SK-N-SH (cell line): ENCODE measurements at regions of chr5 and their contacts with region 1.

Region 1: DNA sequence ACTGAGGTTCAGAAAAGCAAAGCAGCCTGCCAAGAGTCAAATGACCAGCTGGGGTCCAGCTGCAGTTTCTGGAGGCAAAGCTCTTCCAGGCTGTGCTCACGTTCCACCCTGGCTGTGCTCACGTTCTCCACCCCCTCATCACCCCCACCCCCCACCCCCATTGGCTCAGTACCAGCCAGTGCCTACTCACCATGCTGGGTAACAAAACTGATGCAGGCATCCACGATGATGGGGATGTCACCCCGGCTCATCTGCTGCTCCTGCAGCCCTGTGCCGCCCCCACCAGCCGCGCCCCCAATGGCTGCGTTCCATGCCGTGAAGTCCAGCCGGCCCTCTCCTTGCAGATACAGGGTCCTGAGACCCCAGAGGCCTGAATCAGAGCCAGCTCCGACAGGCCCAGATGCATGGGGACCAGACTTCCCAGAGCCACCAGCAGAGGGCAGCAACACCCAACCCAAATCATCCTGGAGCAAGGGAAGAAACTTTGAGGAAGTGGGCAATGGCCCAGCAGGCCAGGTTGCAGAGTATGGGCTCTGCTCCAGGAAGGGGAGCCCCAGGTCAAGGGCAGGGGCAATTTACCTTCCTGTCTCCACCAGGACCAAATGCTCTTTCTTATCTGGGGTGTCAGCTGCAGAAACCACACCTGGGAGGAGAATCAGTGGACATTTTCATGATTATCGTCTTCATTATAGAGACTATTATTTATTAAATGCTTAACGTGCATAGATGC is 13.7 kb upstream of the FCHSD1 start:
- DNase-seq: peak; percentile 90
- H3K4me3 ChIP-seq: no peak overlapping the region; a peak in 1 of 4 replicates
- H3K27ac ChIP-seq: no peak overlapping the region
- H3K4me1 ChIP-seq: no peaks in the 10 kb centered on the region; a peak in 1 of 4 replicates
- H3K27me3 ChIP-seq: no peaks in the 10 kb centered on the region
- CTCF ChIP-seq: peak; percentile 89
- EP300 ChIP-seq: no peak
- RAD21 ChIP-seq: peak; percentile 83

Region 2: DNA sequence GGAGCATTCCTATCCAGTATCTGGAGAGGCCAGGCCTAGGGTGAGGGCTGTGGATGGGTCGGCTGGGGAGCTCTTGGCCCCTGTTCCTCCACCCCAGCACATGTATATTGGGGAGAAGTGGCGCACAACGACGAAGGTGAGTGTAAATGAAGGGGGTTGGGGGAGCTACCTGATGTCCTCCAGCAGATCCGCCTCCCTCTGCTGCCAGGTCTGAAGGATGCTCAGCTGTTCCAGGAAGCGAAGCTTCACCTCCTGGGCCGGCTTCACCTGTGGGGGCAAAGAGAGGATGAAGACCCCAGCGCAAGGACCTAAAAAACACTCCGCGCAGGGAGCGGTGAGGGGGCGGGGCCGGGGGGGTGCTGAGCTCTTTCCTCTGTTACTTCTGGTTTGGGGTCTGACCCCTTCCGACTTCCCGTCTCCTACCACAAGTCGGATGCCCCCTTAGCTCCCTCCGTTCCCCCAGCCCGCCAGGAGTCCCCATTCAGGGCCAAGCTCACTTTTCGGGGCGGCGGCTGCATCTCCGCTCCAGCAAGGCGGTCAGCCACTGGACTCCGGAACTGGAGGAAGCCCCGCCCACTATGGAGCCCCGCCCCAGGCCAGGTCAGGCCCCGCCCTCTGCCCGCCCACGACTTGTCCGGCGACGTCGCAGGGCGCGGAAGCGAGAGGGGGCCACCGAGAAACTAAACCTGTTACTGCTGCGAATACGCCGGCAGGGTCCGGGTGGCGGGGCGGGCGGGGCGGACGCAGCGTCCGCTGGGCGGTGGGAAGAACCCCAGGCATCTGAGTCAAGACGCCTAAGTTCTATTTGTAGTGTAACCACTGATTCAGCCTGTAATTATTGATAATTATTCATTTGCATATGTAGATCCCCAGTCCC is 13.8 kb before region 1 on chr5 and contains the start of gene FCHSD1:
- CTCF ChIA-PET with region 1: interaction called, 36 read pairs
- POLR2A ChIA-PET with region 1: interaction called, 6 read pairs
- DNase-seq: peak; percentile 99
- H3K4me3 ChIP-seq: peak within 1 kb of the TSS; percentile 74 to 83
- H3K27ac ChIP-seq: peak within 1 kb of the TSS in 1 of 2 experiments; percentile 45; a peak in 1 of 4 replicates
- H3K4me1 ChIP-seq: peaks cover 0 to 15% of the 10 kb centered on the region in 2 experiments; a peak in 1 of 4 replicates
- H3K27me3 ChIP-seq: no peaks in the 10 kb centered on the region
- CTCF ChIP-seq: no peak
- EP300 ChIP-seq: no peak
- RAD21 ChIP-seq: no peak
- polyA plus RNA-seq, gene FCHSD1: 49.2 and 58.3 TPM in 2 replicates

Region 3: GRCh38 chr5:141681695-141682641 is 17.1 kb after region 1 on chr5 and contains the start of gene ARAP3:
- CTCF ChIA-PET with region 1: interaction called, 20 read pairs
- POLR2A ChIA-PET with region 1: interaction called, 5 read pairs
- DNase-seq: peak; percentile 91
- H3K4me3 ChIP-seq: peak within 1 kb of the TSS; percentile 52 to 55
- H3K27ac ChIP-seq: peak within 1 kb of the TSS; percentile 72 to 96
- H3K4me1 ChIP-seq: peaks cover 19 to 40% of the 10 kb centered on the region in 2 experiments; a peak in 3 of 4 replicates
- H3K27me3 ChIP-seq: no peaks in the 10 kb centered on the region
- CTCF ChIP-seq: no peak
- EP300 ChIP-seq: peak in 1 of 2 experiments; percentile 47; a peak in 1 of 4 replicates
- RAD21 ChIP-seq: no peak
- polyA plus RNA-seq, gene ARAP3: 5.5 and 6.5 TPM in 2 replicates

Region 4: DNA sequence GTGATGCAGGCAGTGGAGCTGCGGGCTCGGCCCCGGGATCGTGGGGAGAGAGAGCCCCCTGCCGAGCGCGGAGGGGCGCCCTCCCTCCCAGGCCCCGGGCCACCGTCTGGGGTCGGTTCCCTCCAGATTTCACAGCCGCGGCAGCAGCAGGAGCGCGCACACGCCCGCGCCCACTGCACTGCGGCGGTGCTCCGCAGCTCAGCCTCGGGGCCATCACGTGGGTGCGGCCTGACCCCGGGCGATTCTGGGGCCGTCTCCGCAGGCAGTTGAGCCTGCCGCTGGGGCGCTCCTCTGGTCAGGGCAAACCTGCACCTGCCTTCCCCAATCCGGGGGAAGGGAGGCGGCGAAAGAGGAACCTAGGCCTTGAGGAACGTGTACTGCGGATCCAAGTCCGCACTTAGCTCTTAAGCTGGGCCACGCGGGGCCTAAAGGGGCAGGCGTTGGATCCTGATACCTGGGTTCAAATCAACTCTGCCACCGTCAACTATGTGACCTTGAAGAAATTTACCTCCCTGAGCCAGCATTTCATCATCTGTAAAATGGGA is 249.4 kb after region 1 on chr5:
- CTCF ChIA-PET with region 1: interaction called, 12 read pairs
- POLR2A ChIA-PET with region 1: no interaction called
- DNase-seq: peak; percentile 94
- H3K4me3 ChIP-seq: peak overlapping the region in 1 of 2 experiments; percentile 4; a peak in 1 of 4 replicates
- H3K27ac ChIP-seq: no peak overlapping the region
- H3K4me1 ChIP-seq: peaks cover 0 to 4% of the 10 kb centered on the region in 2 experiments; a peak in 1 of 4 replicates
- H3K27me3 ChIP-seq: no peaks in the 10 kb centered on the region; the same call in 1 of the 2 replicates
- CTCF ChIP-seq: no peak
- EP300 ChIP-seq: no peak
- RAD21 ChIP-seq: peak; percentile 75